ENCODE measurements at regions of chr11 and their contacts with region 1.

Region 1: GRCh38 chr11:18321980-18322711 is at the starts of genes GTF2H1 and HPS5:
- DNase-seq: peak; percentile 91 to 96
- H3K4me3 ChIP-seq: peak within 1 kb of the TSS; percentile 75 to 92 (median 86)
- H3K27ac ChIP-seq: peak within 1 kb of the TSS; percentile 100
- H3K4me1 ChIP-seq: no peaks in the 10 kb centered on the region; a peak in 2 of 7 replicates
- H3K27me3 ChIP-seq: no peaks in the 10 kb centered on the region
- CTCF ChIP-seq: no peak
- EP300 ChIP-seq: no peak
- POLR2A ChIP-seq: peak; percentile 91 to 99
- RAD21 ChIP-seq: no peak
- total RNA-seq, gene GTF2H1: 26.3 and 28.0 TPM in 2 replicates
- total RNA-seq, gene HPS5: 16.7 and 18.5 TPM in 2 replicates

Region 2: DNA sequence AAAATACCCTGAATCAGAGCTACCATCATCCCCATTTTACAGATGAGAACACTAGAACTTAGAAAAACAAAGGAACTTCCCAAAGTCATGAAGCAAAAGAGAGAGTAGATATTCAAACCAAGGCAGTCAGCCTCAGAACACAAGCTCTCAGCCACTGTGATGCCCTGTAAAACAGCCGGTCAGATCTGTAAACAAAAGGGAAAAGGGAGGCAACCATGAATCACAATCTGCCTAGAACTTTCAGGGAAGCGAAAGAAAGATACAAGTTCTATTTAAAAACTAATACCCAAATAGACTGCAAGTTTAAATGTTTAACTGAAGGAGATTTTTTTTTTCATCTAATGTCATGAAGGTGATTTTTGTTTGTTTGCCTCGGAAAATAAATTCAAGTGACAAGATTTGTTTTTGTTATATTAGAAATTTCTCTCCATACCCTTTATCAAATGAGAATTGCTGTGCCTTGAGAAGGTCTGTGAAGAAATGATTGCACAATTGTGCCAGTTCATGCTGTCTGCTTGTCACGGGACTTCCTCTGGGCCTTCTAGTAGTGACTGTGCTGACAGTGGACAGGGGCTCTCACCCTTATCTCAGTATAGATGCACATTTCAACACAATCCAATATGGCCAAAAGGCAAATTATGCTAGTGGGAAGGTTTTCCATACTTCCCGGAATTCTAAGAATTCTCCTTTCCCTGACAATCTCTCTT is 44.4 kb before region 1 on chr11:
- CTCF ChIA-PET with region 1: no interaction called
- POLR2A ChIA-PET with region 1: no interaction called
- DNase-seq: no peak
- H3K4me3 ChIP-seq: no peak overlapping the region
- H3K27ac ChIP-seq: no peak overlapping the region
- H3K4me1 ChIP-seq: no peaks in the 10 kb centered on the region; a peak in 1 of 7 replicates
- H3K27me3 ChIP-seq: no peaks in the 10 kb centered on the region
- CTCF ChIP-seq: no peak
- EP300 ChIP-seq: no peak
- POLR2A ChIP-seq: no peak
- RAD21 ChIP-seq: no peak

Region 3: DNA sequence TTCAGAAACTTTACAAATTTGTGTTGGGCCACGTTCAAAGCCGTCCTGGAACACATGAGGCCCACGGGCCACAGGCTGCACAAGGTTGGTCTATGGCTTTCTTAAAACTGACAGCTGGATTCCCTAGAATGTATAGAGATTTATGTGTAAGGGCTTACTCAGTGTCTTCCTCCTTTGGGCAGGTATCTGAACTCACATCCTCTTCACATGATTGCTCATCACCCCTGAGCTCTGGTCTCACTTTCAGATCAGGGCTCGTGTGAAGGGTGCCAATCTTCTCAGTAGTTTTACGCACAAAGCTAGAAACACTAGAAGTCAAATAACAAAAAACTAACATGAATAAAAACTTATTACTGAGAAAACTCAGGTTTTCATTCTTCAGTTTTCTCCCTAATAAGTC is 27.3 kb before region 1 on chr11:
- CTCF ChIA-PET with region 1: no interaction called
- POLR2A ChIA-PET with region 1: interaction called, 10 read pairs
- DNase-seq: no peak
- H3K4me3 ChIP-seq: no peak overlapping the region
- H3K27ac ChIP-seq: no peak overlapping the region
- H3K4me1 ChIP-seq: no peaks in the 10 kb centered on the region
- H3K27me3 ChIP-seq: no peaks in the 10 kb centered on the region
- CTCF ChIP-seq: no peak
- EP300 ChIP-seq: no peak
- POLR2A ChIP-seq: no peak
- RAD21 ChIP-seq: no peak

Region 4: GRCh38 chr11:18332302-18332701 is 10.2 kb after region 1 on chr11:
- CTCF ChIA-PET with region 1: no interaction called
- POLR2A ChIA-PET with region 1: interaction called, 22 read pairs
- DNase-seq: peak in 1 of 2 experiments; percentile 19
- H3K4me3 ChIP-seq: no peak overlapping the region
- H3K27ac ChIP-seq: no peak overlapping the region
- H3K4me1 ChIP-seq: 0 out of 7 replicates have a peak, but pooled peaks cover 0 to 3% (median 0%) of the 10 kb centered on the region in 4 experiments
- H3K27me3 ChIP-seq: no peaks in the 10 kb centered on the region
- CTCF ChIP-seq: no peak
- EP300 ChIP-seq: no peak
- POLR2A ChIP-seq: no peak
- RAD21 ChIP-seq: no peak